Breast epithelium (tissue), 4 donors: ENCODE measurements at regions of chr3 and their contacts with region 1.

Region 1: GRCh38 chr3:33006081-33006480 is 54.6 kb downstream of the CCR4 start:
- DNase-seq: no peak
- H3K4me3 ChIP-seq: no peak overlapping the region
- H3K27ac ChIP-seq: no peak overlapping the region
- H3K4me1 ChIP-seq: no peaks in the 10 kb centered on the region
- H3K27me3 ChIP-seq: no peaks in the 10 kb centered on the region
- CTCF ChIP-seq: no peak
- POLR2A ChIP-seq: no peak

Region 2: DNA sequence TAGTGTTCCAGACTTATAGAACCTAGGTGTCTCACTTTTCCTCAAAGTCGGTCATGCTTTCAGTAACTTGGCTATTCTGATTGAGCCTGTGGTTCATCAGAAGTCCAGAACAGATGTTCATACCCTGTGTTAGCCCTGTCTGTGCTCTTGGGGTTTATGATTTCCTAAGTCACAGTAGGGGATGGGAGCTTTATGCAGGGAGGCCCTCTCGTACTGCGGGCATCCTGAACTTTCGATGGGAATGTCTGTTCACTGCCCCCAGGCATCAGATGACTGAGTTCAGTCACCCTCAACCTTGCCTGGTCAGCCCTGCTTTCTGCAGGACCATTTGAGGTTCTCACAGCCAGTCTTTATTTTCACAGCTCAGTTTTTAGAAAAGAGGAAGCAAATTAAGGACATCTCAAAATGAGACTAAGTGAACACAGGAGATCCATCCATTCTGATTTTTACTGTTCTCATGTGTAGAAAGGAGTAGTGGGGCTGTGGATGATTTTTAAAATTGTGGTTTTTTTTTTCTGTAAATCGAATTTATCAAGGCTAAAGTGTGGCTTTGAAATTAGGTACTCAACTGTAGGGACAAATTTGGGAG is 696.3 kb before region 1 on chr3:
- intact Hi-C with region 1: loop called (anchors 5 kb)
- DNase-seq: no peak
- H3K4me3 ChIP-seq: no peak overlapping the region
- H3K27ac ChIP-seq: no peak overlapping the region
- H3K4me1 ChIP-seq: peaks cover 0 to 6% of the 10 kb centered on the region in 2 donors
- H3K27me3 ChIP-seq: no peaks in the 10 kb centered on the region
- CTCF ChIP-seq: no peak
- POLR2A ChIP-seq: no peak

Region 3: GRCh38 chr3:33047842-33048834 is 42.1 kb after region 1 on chr3:
- intact Hi-C with region 1: no loop called
- DNase-seq: no peak
- H3K4me3 ChIP-seq: no peak overlapping the region
- H3K27ac ChIP-seq: no peak overlapping the region
- H3K4me1 ChIP-seq: no peaks in the 10 kb centered on the region
- H3K27me3 ChIP-seq: no peaks in the 10 kb centered on the region
- CTCF ChIP-seq: no peak
- POLR2A ChIP-seq: no peak

Region 4: DNA sequence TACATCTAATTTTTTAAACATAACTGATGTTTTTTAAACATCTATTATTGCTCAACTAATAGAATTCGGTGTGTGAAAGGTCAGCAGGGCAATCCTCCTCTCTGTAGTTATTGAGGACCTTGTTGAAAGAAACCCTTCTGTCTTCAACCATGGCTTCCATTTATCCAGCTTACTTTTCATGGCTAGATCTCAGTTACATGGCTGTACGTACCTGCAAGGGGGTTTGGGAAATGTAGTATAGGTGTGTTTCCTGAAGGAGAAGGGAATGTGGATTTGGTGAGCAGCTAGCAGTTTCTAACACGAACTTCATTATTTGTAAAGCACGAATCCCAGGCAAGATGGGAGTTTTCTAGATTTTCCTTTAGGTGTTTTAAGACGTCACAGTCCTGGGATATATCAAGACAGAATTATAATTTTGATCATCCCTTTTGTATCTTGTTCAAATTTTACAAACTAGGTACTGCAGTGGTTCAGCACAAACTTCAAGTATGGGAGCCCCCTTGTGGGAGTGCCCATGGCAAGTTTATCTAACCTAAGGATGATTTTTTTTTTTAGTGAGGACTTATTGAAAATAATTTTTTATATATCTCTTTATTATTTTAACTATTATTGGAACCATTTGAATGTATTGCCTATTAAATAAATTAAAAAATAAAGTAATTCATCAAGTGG is 312.8 kb after region 1 on chr3:
- intact Hi-C with region 1: no loop called
- DNase-seq: no peak
- H3K4me3 ChIP-seq: no peak overlapping the region
- H3K27ac ChIP-seq: no peak overlapping the region
- H3K4me1 ChIP-seq: no peaks in the 10 kb centered on the region
- H3K27me3 ChIP-seq: no peaks in the 10 kb centered on the region
- CTCF ChIP-seq: no peak
- POLR2A ChIP-seq: no peak